ENCODE measurements at regions of chr18 and their contacts with region 1.

Region 1: GRCh38 chr18:24118750-24119577 is 19.9 kb upstream of the CABYR start:
- DNase-seq: peak; percentile 84
- ATAC-seq: peak; percentile 88
- H3K4me3 ChIP-seq: no peak overlapping the region
- H3K4me3 Mint-ChIP-seq: no peak overlapping the region
- H3K27ac ChIP-seq: no peak overlapping the region
- H3K27ac Mint-ChIP-seq: no peak overlapping the region
- H3K4me1 ChIP-seq: peaks cover 0 to 7% of the 10 kb centered on the region in 2 donors
- H3K4me1 Mint-ChIP-seq: peaks cover 9% of the 10 kb centered on the region
- H3K27me3 ChIP-seq: no peaks in the 10 kb centered on the region
- H3K27me3 Mint-ChIP-seq: no peaks in the 10 kb centered on the region
- CTCF ChIP-seq: peak; percentile 98

Region 2: GRCh38 chr18:23515911-23516546 is 602.9 kb before region 1 on chr18:
- CTCF ChIA-PET with region 1: interaction called, 3 read pairs
- POLR2A ChIA-PET with region 1: no interaction called
- intact Hi-C with region 1: loop called (anchors 1 kb)
- DNase-seq: peak; percentile 82
- ATAC-seq: peak; percentile 97
- H3K4me3 ChIP-seq: no peak overlapping the region
- H3K4me3 Mint-ChIP-seq: no peak overlapping the region
- H3K27ac ChIP-seq: peak overlapping the region in 1 of 2 donors; percentile 57
- H3K27ac Mint-ChIP-seq: peak overlapping the region; percentile 46
- H3K4me1 ChIP-seq: peaks cover 9 to 12% of the 10 kb centered on the region in 2 donors
- H3K4me1 Mint-ChIP-seq: peaks cover 22% of the 10 kb centered on the region
- H3K27me3 ChIP-seq: no peaks in the 10 kb centered on the region
- H3K27me3 Mint-ChIP-seq: no peaks in the 10 kb centered on the region
- CTCF ChIP-seq: peak; percentile 92

Region 3: DNA sequence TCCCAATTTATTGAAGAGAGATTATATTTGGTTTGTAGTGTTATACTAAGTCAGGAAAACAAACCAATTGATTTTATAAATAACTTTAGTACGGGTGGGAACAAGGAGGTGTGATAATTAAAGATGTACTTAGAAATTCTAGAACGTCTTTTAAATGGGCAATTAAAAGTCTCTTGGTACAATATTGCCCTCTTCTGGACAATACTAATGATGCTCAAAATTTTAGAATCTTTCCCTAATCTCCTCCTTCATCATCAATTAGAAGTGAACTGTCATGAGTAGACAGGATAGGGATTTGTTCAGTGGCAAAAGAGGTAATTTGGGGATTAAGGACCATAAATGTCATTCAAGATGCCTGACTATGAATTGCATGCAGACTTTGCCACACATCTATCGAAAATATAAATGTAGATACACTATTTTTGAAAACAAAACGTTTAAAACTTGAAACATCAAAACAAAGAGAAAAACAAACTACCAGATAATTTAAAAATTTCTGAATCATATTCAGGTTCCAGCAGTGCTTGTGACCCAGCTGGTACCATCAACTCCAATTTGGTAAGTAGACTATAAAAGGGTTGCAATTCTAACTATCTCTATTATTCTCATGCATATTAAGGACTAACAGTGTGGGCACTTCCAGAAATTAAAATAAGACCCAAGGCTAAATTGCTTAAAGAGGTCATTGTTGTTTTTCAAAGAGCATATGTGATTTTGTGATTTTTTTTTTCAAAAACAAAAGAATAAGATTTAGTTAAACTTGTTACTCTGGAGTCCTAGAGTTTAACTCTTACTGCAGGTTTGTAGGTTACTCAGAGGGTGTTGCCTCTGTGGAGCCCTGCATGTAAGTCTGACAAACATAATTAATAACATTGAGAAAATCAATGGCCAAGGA is 306.2 kb before region 1 on chr18:
- CTCF ChIA-PET with region 1: interaction called, 8 read pairs
- POLR2A ChIA-PET with region 1: no interaction called
- intact Hi-C with region 1: loop called (anchors 1 kb)
- DNase-seq: peak; percentile 40
- ATAC-seq: peak; percentile 33
- H3K4me3 ChIP-seq: no peak overlapping the region
- H3K4me3 Mint-ChIP-seq: no peak overlapping the region
- H3K27ac ChIP-seq: no peak overlapping the region
- H3K27ac Mint-ChIP-seq: no peak overlapping the region
- H3K4me1 ChIP-seq: peaks cover 5 to 8% of the 10 kb centered on the region in 2 donors
- H3K4me1 Mint-ChIP-seq: peaks cover 8% of the 10 kb centered on the region
- H3K27me3 ChIP-seq: no peaks in the 10 kb centered on the region
- H3K27me3 Mint-ChIP-seq: peaks cover 5% of the 10 kb centered on the region
- CTCF ChIP-seq: peak; percentile 71

Region 4: GRCh38 chr18:23912356-23912755 is 206.6 kb before region 1 on chr18:
- CTCF ChIA-PET with region 1: no interaction called
- POLR2A ChIA-PET with region 1: no interaction called
- intact Hi-C with region 1: no loop called
- DNase-seq: no peak
- ATAC-seq: no peak
- H3K4me3 ChIP-seq: no peak overlapping the region
- H3K4me3 Mint-ChIP-seq: no peak overlapping the region
- H3K27ac ChIP-seq: no peak overlapping the region
- H3K27ac Mint-ChIP-seq: no peak overlapping the region
- H3K4me1 ChIP-seq: no peaks in the 10 kb centered on the region
- H3K4me1 Mint-ChIP-seq: peaks cover 4% of the 10 kb centered on the region
- H3K27me3 ChIP-seq: no peaks in the 10 kb centered on the region
- H3K27me3 Mint-ChIP-seq: no peaks in the 10 kb centered on the region
- CTCF ChIP-seq: no peak

Region 5: DNA sequence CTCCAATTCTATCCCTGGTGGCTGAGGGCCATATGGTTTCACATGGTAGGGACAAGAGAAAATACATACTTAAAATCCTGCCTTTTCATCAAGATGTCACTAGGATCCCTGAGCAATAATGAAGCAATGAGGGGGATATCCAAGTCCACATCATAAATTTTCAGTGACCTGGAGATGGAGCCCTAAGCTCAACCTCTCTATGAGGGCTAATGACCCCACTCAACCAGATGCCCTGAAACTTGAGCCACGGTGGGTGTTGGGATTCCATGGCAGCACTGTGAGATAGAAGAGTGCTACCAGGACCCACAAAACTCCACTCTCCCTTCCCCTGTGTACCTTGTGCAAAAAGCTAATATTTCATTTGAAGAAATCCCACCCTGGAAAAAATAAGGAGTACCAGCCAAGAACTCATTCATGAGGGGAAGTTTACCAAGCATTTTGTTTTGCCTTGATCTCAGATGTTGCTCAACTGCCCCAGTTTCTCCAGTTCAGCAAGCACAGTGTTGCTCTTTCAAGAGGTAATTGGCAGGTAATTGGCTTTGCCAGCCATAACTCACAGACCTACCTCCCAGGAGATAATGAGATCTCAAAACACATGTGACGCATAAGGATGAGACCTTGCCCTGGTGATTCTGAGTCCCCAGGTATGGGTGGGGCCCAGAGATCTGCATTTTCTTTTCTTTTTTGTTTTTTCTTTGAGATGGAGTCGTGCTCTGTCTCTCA is 155.4 kb before region 1 on chr18:
- CTCF ChIA-PET with region 1: interaction called, 5 read pairs
- POLR2A ChIA-PET with region 1: no interaction called
- intact Hi-C with region 1: loop called (anchors 1 kb)
- DNase-seq: no peak
- ATAC-seq: no peak
- H3K4me3 ChIP-seq: no peak overlapping the region
- H3K4me3 Mint-ChIP-seq: no peak overlapping the region
- H3K27ac ChIP-seq: no peak overlapping the region
- H3K27ac Mint-ChIP-seq: peak overlapping the region; percentile 64
- H3K4me1 ChIP-seq: peaks cover 45 to 52% of the 10 kb centered on the region in 2 donors
- H3K4me1 Mint-ChIP-seq: peaks cover 47% of the 10 kb centered on the region
- H3K27me3 ChIP-seq: no peaks in the 10 kb centered on the region
- H3K27me3 Mint-ChIP-seq: no peaks in the 10 kb centered on the region
- CTCF ChIP-seq: no peak

Region 6: DNA sequence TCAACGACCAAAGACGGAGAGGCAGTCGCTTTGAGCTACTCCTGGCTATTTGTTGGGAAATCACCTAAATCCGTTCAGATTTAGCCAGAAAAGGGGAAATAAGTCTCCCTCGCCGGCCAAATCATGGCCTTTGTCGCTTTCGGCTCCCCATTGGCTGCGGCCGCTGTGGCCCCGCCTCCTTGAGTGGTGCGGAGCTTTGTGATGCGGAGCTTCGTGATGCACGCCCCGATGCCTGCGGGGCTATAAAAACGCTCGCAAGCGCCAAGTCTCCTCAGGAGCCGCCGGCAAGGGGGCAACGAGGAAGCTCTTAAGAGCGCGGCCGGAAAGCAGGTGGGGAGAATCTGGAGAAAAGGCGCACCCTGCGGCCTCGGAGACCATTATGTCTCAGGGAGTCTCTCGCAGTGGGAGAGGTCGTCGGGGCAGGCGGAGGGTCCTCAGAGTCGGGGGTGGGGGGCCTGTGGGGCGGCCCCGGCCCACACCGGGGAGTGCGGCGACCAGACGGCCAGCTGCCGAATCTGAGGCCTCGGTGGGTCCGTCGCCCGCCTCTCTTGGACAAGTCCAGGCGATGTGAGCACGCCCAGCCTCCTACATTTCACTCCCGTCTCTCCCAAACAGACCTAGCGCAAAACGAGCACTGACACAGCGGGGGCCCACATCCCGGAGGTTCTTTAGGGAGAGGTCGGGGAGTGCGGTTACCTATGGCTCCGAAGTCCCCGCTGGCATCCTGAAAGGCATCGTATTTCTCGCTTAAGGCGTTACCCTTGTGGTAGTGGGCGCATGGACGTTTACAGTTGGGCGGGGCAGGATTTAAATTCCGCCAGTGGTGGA is 20.0 kb after region 1 on chr18 and contains the start of gene CABYR:
- CTCF ChIA-PET with region 1: interaction called, 15 read pairs
- POLR2A ChIA-PET with region 1: no interaction called
- intact Hi-C with region 1: no loop called
- DNase-seq: peak; percentile 90
- ATAC-seq: peak; percentile 93
- H3K4me3 ChIP-seq: peak within 1 kb of the TSS; percentile 55 to 72 (median 66)
- H3K4me3 Mint-ChIP-seq: peak within 1 kb of the TSS; percentile 87
- H3K27ac ChIP-seq: peak within 1 kb of the TSS; percentile 26 to 83
- H3K27ac Mint-ChIP-seq: peak within 1 kb of the TSS; percentile 57
- H3K4me1 ChIP-seq: peaks cover 10 to 19% of the 10 kb centered on the region in 2 donors
- H3K4me1 Mint-ChIP-seq: peaks cover 16% of the 10 kb centered on the region
- H3K27me3 ChIP-seq: peaks cover 0 to 13% (median 0%) of the 10 kb centered on the region in 4 experiments
- H3K27me3 Mint-ChIP-seq: peaks cover 7% of the 10 kb centered on the region
- CTCF ChIP-seq: no peak
- total RNA-seq, gene CABYR: 1.7 and 2.0 TPM in 2 replicates

Measured in B cell (primary cell).